IMR-90 (cell line): ENCODE measurements at regions of chr11 and their contacts with region 1.

Region 1: DNA sequence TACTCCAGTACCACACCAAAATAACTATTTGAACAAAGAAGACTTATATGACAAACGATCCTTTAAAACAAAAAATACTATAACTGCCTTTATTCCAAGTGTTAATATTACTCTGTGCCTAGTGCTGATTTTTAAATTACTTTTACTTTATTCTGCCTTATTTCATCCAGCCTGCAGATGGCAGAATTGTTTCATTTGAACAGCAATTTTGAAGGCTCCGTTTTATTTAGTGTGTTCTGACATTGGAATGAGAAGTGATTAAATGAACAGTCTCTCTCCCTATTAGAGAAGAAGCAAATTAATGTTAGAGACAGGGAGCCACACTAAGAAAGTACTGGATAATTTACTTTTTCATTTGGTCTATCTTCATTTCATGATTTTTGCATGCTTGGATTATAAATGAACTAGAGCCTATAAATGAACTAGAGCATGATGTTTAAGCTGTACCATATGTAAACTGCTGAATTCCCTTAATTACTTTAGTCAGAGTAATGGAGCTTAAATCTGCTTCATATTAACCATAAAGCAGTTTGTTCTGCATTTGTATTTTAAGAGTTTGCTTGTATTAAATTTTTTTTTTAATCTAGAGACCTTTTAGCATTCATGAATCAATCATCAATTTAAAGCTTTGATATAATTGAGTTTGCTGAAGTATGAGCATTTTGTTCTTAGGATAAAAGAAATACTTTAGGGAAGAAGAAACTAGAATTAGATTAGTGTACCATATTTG is 9.8 kb downstream of the PDHX start:
- DNase-seq: peak; percentile 62
- ATAC-seq: peak; percentile 66
- H3K4me3 ChIP-seq: no peak overlapping the region
- H3K27ac ChIP-seq: peak overlapping the region; percentile 50
- H3K4me1 ChIP-seq: peaks cover 14% of the 10 kb centered on the region
- H3K27me3 ChIP-seq: no peaks in the 10 kb centered on the region
- CTCF ChIP-seq: peak; percentile 83
- POLR2A ChIP-seq: no peak
- RAD21 ChIP-seq: peak; percentile 89

Region 2: GRCh38 chr11:34654491-34655334 is 271.6 kb before region 1 on chr11:
- CTCF ChIA-PET with region 1: no interaction called
- POLR2A ChIA-PET with region 1: no interaction called
- dilution Hi-C with region 1: no loop called
- in situ Hi-C with region 1: no loop called
- intact Hi-C with region 1: no loop called
- DNase-seq: peak; percentile 66
- ATAC-seq: peak; percentile 2; the same call in 1 of the 2 replicates
- H3K4me3 ChIP-seq: no peak overlapping the region
- H3K27ac ChIP-seq: peak overlapping the region; percentile 40
- H3K4me1 ChIP-seq: peaks cover 11% of the 10 kb centered on the region
- H3K27me3 ChIP-seq: no peaks in the 10 kb centered on the region
- CTCF ChIP-seq: no peak
- POLR2A ChIP-seq: no peak; the same call in 1 of the 2 replicates
- RAD21 ChIP-seq: no peak

Region 3: GRCh38 chr11:34977089-34977906 is 51.0 kb after region 1 on chr11:
- CTCF ChIA-PET with region 1: interaction called, 3 read pairs
- POLR2A ChIA-PET with region 1: no interaction called
- dilution Hi-C with region 1: no loop called
- in situ Hi-C with region 1: no loop called
- intact Hi-C with region 1: loop called (anchors 1 kb)
- DNase-seq: peak; percentile 94
- ATAC-seq: peak; percentile 77
- H3K4me3 ChIP-seq: no peak overlapping the region
- H3K27ac ChIP-seq: peak overlapping the region; percentile 100; the same call in 1 of the 2 replicates
- H3K4me1 ChIP-seq: peaks cover 21% of the 10 kb centered on the region
- H3K27me3 ChIP-seq: no peaks in the 10 kb centered on the region
- CTCF ChIP-seq: no peak
- POLR2A ChIP-seq: no peak
- RAD21 ChIP-seq: no peak

Region 4: GRCh38 chr11:35138943-35139721 is 212.9 kb after region 1 on chr11 and contains the start of gene CD44:
- CTCF ChIA-PET with region 1: no interaction called
- POLR2A ChIA-PET with region 1: interaction called, 6 read pairs
- dilution Hi-C with region 1: no loop called
- in situ Hi-C with region 1: no loop called
- intact Hi-C with region 1: loop called (anchors 2 kb)
- DNase-seq: peak; percentile 86
- ATAC-seq: peak; percentile 68
- H3K4me3 ChIP-seq: peak within 1 kb of the TSS; percentile 74
- H3K27ac ChIP-seq: peak within 1 kb of the TSS; percentile 97
- H3K4me1 ChIP-seq: peaks cover 21% of the 10 kb centered on the region
- H3K27me3 ChIP-seq: no peaks in the 10 kb centered on the region
- CTCF ChIP-seq: no peak
- POLR2A ChIP-seq: peak; percentile 98
- RAD21 ChIP-seq: no peak
- total RNA-seq, gene CD44: 341 and 357 TPM in 2 replicates

Region 5: DNA sequence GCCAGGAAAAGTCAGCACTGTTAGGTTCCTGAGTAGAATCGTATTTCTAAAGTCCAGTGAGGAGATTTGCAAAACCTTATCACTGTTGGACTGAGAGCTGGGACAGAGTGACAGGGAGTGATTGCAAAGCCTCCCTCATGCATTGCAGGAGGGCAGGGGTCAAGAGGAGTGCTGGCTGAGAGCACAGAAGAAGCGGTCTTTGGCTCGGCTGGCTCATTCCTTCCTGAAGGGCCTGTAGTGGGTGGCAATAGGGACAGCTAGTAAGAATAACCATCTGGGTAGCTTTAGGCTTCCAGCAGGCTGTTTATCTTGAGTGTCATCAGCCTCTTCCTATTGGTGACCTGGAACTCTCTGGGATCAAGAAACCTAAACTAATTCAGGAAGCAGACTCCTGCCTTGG is 266.1 kb after region 1 on chr11:
- CTCF ChIA-PET with region 1: no interaction called
- POLR2A ChIA-PET with region 1: no interaction called
- dilution Hi-C with region 1: no loop called
- in situ Hi-C with region 1: no loop called
- intact Hi-C with region 1: loop called (anchors 2 kb)
- DNase-seq: peak; percentile 38
- ATAC-seq: peak; percentile 45
- H3K4me3 ChIP-seq: no peak overlapping the region
- H3K27ac ChIP-seq: peak overlapping the region; percentile 64
- H3K4me1 ChIP-seq: peaks cover 28% of the 10 kb centered on the region
- H3K27me3 ChIP-seq: no peaks in the 10 kb centered on the region
- CTCF ChIP-seq: no peak
- POLR2A ChIP-seq: no peak
- RAD21 ChIP-seq: no peak

Region 6: GRCh38 chr11:35305670-35306382 is 379.6 kb after region 1 on chr11:
- CTCF ChIA-PET with region 1: interaction called, 6 read pairs
- POLR2A ChIA-PET with region 1: no interaction called
- dilution Hi-C with region 1: no loop called
- in situ Hi-C with region 1: no loop called
- intact Hi-C with region 1: loop called (anchors 10 kb)
- DNase-seq: peak; percentile 56
- ATAC-seq: peak; percentile 82
- H3K4me3 ChIP-seq: no peak overlapping the region
- H3K27ac ChIP-seq: peak overlapping the region; percentile 10; the same call in 1 of the 2 replicates
- H3K4me1 ChIP-seq: peaks cover 14% of the 10 kb centered on the region
- H3K27me3 ChIP-seq: no peaks in the 10 kb centered on the region
- CTCF ChIP-seq: peak; percentile 49
- POLR2A ChIP-seq: no peak
- RAD21 ChIP-seq: peak; percentile 55